Activated naive CD4-positive, alpha-beta T cell treated with anti-CD3 and anti-CD28 coated beads for 36 hours (primary cell): ENCODE measurements at regions of chr9 and their contacts with region 1.

Region 1: GRCh38 chr9:71806901-71807307 is 38.6 kb upstream of the CEMIP2 start:
- DNase-seq: peak; percentile 77
- H3K4me3 Mint-ChIP-seq: no peak overlapping the region
- H3K27ac Mint-ChIP-seq: no peak overlapping the region
- H3K4me1 Mint-ChIP-seq: peaks cover 8% of the 10 kb centered on the region
- H3K27me3 Mint-ChIP-seq: no peaks in the 10 kb centered on the region

Region 2: GRCh38 chr9:71604197-71605063 is 202.5 kb before region 1 on chr9:
- CTCF ChIA-PET with region 1: interaction called, 9 read pairs
- intact Hi-C with region 1: loop called (anchors 1 kb)
- DNase-seq: peak; percentile 89
- H3K4me3 Mint-ChIP-seq: no peak overlapping the region
- H3K27ac Mint-ChIP-seq: no peak overlapping the region
- H3K4me1 Mint-ChIP-seq: no peaks in the 10 kb centered on the region
- H3K27me3 Mint-ChIP-seq: no peaks in the 10 kb centered on the region

Region 3: GRCh38 chr9:71783120-71783530 is 23.8 kb before region 1 on chr9:
- CTCF ChIA-PET with region 1: interaction called, 20 read pairs
- intact Hi-C with region 1: loop called (anchors 1 kb)
- DNase-seq: peak; percentile 95
- H3K4me3 Mint-ChIP-seq: peak overlapping the region; percentile 67
- H3K27ac Mint-ChIP-seq: peak overlapping the region; percentile 92
- H3K4me1 Mint-ChIP-seq: peaks cover 47% of the 10 kb centered on the region
- H3K27me3 Mint-ChIP-seq: no peaks in the 10 kb centered on the region

Region 4: GRCh38 chr9:71795097-71795813 is 11.6 kb before region 1 on chr9:
- CTCF ChIA-PET with region 1: interaction called, 23 read pairs
- intact Hi-C with region 1: no loop called
- DNase-seq: no peak
- H3K4me3 Mint-ChIP-seq: no peak overlapping the region
- H3K27ac Mint-ChIP-seq: peak overlapping the region; percentile 72
- H3K4me1 Mint-ChIP-seq: peaks cover 61% of the 10 kb centered on the region
- H3K27me3 Mint-ChIP-seq: no peaks in the 10 kb centered on the region

Region 5: GRCh38 chr9:71819115-71819739 is 12.3 kb after region 1 on chr9:
- CTCF ChIA-PET with region 1: interaction called, 49 read pairs
- intact Hi-C with region 1: loop called (anchors 1 kb)
- DNase-seq: peak; percentile 68
- H3K4me3 Mint-ChIP-seq: no peak overlapping the region
- H3K27ac Mint-ChIP-seq: no peak overlapping the region
- H3K4me1 Mint-ChIP-seq: peaks cover 16% of the 10 kb centered on the region
- H3K27me3 Mint-ChIP-seq: no peaks in the 10 kb centered on the region

Region 6: GRCh38 chr9:71975833-71976232 is 168.9 kb after region 1 on chr9:
- CTCF ChIA-PET with region 1: interaction called, 5 read pairs
- intact Hi-C with region 1: loop called (anchors 2 kb)
- DNase-seq: no peak
- H3K4me3 Mint-ChIP-seq: no peak overlapping the region
- H3K27ac Mint-ChIP-seq: no peak overlapping the region
- H3K4me1 Mint-ChIP-seq: no peaks in the 10 kb centered on the region
- H3K27me3 Mint-ChIP-seq: no peaks in the 10 kb centered on the region

Region 7: GRCh38 chr9:72271613-72272478 is 464.9 kb after region 1 on chr9:
- CTCF ChIA-PET with region 1: no interaction called
- intact Hi-C with region 1: loop called (anchors 2 kb)
- DNase-seq: peak; percentile 69
- H3K4me3 Mint-ChIP-seq: no peak overlapping the region
- H3K27ac Mint-ChIP-seq: no peak overlapping the region
- H3K4me1 Mint-ChIP-seq: no peaks in the 10 kb centered on the region
- H3K27me3 Mint-ChIP-seq: no peaks in the 10 kb centered on the region